Head of caudate nucleus (tissue), 42 donors: ENCODE measurements at regions of chr7 and their contacts with region 1.

Region 1: GRCh38 chr7:51315393-51316261 is 982 bp downstream of the COBL start:
- DNase-seq: peak; percentile 35 to 88 (median 68)

Region 2: GRCh38 chr7:51187941-51188340 is 127.7 kb before region 1 on chr7:
- intact Hi-C with region 1: loop called (anchors 10 kb)
- DNase-seq: peak in 41 of 42 donors; percentile 40 to 86 (median 71)

Region 3: DNA sequence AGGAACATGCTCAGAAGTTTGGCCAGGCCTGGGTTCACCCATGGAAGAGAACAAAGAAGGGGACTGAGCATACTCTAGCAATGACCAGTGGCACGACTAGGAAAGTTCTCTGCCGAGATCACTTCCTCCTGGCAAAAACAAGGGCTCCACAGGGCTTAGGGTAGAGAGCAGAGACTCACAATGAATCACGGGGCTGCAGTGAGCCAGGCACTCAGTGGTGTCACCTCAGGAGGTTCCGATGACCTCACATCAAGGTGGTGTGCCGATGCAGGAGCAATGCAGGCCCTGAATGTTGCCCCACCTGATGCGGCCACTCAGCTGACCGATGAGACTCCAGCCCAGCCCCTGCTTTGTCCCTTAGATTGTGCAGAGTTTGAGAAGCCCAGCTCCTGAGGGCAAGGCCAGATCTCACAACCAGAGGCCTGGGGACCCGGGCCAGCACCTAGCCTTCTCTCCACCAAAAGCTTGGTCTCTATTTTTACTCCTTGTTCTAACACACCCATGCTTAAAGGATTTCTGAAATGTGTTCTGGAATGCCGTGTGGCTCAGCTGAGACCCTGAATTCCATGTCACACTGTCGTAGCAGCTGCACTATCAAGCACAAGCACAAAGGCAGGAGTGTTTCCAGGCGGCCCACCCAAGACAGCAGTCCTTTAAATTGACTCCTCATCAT is 60.0 kb before region 1 on chr7:
- intact Hi-C with region 1: loop called (anchors 5 kb)
- DNase-seq: peak in 9 of 42 donors; percentile 23 to 59 (median 46)

Region 4: GRCh38 chr7:51268859-51269258 is 46.8 kb before region 1 on chr7:
- intact Hi-C with region 1: no loop called
- DNase-seq: peak in 31 of 42 donors; percentile 49 to 88 (median 70)

Region 5: DNA sequence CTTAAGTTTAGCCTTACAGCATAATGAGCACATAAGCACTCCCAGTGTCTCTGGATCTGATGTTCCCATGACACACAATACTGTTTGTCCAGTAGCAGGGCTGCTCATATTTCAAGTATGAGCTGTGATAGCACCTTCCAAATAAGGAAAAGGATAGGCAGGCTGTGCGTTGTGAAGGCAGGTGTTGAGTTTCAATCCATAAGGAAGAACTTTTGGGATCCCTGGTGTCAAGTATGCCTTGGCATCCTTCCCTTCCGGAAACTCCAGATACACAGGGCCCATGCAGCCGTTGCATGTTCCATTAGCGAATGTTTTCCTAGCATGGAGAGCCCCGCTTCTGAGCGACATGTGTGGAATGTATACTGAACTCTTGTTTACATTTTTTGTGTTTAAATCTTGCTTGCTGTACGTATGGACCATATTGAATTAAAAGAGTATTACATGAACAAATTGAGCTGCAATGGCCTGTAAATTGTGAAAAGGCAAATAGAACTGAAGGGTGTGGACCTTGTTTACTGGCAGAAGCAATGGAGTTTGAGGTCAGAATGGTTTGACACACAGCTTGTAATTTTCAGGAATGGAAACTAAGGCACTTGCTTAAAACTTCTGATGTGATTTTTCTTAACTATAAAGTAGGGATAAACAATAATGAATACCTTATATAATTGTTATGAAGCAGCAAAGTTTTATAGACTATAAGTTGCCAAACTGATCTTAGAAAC is 34.7 kb after region 1 on chr7:
- intact Hi-C with region 1: loop called (anchors 5 kb)
- DNase-seq: no peak